OCI-LY7 (cell line): ENCODE measurements at regions of chrX and their contacts with region 1.

Region 1: DNA sequence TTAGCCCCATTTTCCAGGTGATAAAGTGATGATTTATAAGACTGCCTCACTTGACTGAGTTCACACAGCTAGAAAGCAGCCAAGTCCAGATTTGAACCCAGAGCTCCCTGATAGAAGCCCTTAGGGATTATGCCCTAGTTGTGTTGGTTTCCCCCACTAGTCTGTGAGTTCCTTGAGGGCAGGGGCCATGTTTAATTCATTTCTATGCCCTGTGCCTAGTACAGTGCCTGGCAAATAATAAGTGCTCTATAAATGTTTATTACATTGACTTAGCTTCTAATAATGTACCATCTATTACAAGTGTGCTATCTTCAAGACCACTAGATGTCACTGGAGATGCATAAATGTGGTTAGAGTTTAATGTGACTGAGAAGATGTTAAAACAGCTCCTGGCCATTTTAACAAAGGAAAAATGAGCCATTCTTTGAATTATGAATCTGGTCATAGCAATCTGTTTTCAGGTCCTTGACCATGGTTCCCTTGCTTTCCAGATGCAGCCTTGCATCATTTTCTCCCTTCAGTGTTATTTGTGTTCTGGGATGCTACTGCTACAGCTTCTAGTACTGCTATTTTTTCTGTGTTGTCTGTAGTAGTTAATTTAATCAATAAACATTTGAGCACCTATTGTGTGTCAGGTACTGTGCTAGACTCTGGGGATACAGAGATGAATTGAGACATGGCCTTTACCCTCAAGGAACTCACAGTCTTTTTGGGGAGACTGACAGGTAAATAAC is 43.2 kb downstream of the SLC9A6 start:
- DNase-seq: peak; percentile 43
- H3K4me3 ChIP-seq: no peak overlapping the region
- H3K27ac ChIP-seq: no peak overlapping the region
- H3K4me1 ChIP-seq: no peaks in the 10 kb centered on the region
- CTCF ChIP-seq: peak; percentile 75

Region 2: GRCh38 chrX:135213200-135213844 is 815.1 kb before region 1 on chrX:
- CTCF ChIA-PET with region 1: no interaction called
- POLR2A ChIA-PET with region 1: no interaction called
- intact Hi-C with region 1: no loop called
- DNase-seq: no peak
- H3K4me3 ChIP-seq: no peak overlapping the region
- H3K27ac ChIP-seq: no peak overlapping the region
- H3K4me1 ChIP-seq: no peaks in the 10 kb centered on the region
- CTCF ChIP-seq: no peak

Region 3: GRCh38 chrX:135985141-135985972 is 43.1 kb before region 1 on chrX and contains the start of gene SLC9A6:
- CTCF ChIA-PET with region 1: no interaction called
- POLR2A ChIA-PET with region 1: no interaction called
- intact Hi-C with region 1: no loop called
- DNase-seq: peak; percentile 83
- H3K4me3 ChIP-seq: peak within 1 kb of the TSS; percentile 84
- H3K27ac ChIP-seq: peak within 1 kb of the TSS; percentile 66
- H3K4me1 ChIP-seq: peaks cover 18% of the 10 kb centered on the region
- CTCF ChIP-seq: no peak
- total RNA-seq, gene SLC9A6: 5.9 and 7.7 TPM in 2 replicates

Region 4: DNA sequence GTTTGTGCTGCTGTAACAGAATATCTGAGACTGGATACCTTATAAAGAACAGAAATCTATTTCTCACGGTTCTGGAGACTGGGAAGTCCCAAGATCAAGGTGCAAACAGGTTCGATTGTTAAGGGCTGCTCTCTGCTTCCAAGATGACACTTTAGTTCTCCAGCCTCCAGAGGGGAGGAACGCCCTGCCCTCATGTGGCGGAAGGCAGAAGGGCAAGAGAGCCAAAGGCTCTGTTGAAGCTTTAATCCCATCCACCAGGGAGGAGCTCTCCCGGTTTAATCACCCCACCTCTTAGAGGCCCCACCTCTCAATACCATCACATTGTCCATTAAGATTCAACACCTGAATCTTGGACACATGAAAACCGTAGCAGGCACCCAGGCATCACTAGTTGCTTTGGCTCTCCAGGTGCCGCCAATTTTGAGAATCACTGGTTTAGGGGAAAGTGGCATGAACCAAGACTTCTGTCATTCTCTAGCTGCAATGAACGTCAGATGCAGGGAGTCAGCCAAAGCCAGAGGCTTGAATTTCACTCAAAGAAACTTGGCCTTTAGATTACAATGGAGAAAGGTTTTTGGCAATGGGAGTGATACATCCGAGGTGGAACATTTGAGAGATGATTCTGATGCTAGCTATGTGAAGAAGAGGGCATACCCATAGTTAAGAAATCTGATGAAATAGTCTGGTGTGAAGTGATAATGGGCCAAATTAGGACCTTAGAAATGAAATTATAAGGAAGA is 134.6 kb after region 1 on chrX:
- CTCF ChIA-PET with region 1: interaction called, 14 read pairs
- POLR2A ChIA-PET with region 1: interaction called, 3 read pairs
- intact Hi-C with region 1: loop called (anchors 2 kb)
- DNase-seq: peak; percentile 42
- H3K4me3 ChIP-seq: no peak overlapping the region
- H3K27ac ChIP-seq: no peak overlapping the region
- H3K4me1 ChIP-seq: peaks cover 1% of the 10 kb centered on the region
- CTCF ChIP-seq: peak; percentile 74

Region 5: GRCh38 chrX:136200466-136200865 is 172.0 kb after region 1 on chrX:
- CTCF ChIA-PET with region 1: no interaction called
- POLR2A ChIA-PET with region 1: no interaction called
- intact Hi-C with region 1: loop called (anchors 5 kb)
- DNase-seq: peak; percentile 1
- H3K4me3 ChIP-seq: no peak overlapping the region
- H3K27ac ChIP-seq: no peak overlapping the region
- H3K4me1 ChIP-seq: no peaks in the 10 kb centered on the region
- CTCF ChIP-seq: peak; percentile 63

Region 6: GRCh38 chrX:136251041-136251991 is 222.9 kb after region 1 on chrX and contains the start of gene MAP7D3:
- CTCF ChIA-PET with region 1: no interaction called
- POLR2A ChIA-PET with region 1: no interaction called
- intact Hi-C with region 1: no loop called
- DNase-seq: peak; percentile 76
- H3K4me3 ChIP-seq: peak within 1 kb of the TSS; percentile 90
- H3K27ac ChIP-seq: no peak within 1 kb of the TSS
- H3K4me1 ChIP-seq: peaks cover 9% of the 10 kb centered on the region
- CTCF ChIP-seq: no peak
- total RNA-seq, gene MAP7D3: 7.7 and 11.9 TPM in 2 replicates

Region 7: DNA sequence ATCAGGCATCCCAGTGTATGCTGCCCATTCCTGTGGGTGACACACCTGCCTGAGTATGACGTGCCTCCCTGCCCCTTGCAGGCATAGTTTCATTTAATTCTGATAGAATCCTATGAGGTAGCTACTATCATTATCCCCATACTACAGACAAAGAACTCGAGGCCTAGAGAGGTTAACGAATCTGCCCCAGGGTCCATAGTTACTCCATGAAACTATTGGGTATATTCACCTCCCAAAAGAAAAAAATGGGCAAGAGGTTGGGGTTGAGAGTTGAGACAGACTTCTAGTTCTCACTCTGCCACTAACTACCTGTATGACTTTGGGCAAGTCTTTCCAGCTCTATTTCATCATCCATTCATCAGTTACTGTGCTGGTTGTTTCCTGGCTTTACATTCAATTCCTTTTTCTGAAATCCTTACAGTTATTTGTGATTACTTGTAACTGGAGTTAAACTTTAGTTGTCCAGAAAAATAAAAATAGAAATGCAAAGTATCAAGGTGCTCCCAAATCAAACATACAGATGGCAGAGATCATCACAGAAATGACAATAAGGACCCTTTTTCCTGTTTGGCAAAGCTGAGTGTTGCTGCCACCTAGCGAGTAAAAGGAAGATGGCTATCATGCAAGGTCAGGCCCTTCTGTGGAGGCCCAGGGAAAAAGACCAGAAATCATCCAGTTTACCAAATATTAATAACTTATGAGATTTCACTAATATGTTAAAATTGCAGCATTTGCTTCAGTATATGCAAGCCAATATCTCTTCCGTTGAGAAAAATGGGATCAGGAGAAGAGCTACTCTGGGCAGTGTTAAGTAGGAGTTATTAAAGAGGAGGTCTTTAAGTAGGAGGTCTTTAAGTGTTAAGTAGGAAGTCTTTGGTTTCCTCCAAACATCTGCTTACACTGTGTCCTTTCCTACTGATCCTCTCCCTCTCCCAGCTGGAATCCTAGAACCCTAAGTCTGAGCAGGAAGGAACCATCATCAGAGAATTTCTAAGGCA is 239.9 kb after region 1 on chrX:
- CTCF ChIA-PET with region 1: no interaction called
- POLR2A ChIA-PET with region 1: interaction called, 4 read pairs
- intact Hi-C with region 1: loop called (anchors 5 kb)
- DNase-seq: peak; percentile 63
- H3K4me3 ChIP-seq: no peak overlapping the region
- H3K27ac ChIP-seq: no peak overlapping the region
- H3K4me1 ChIP-seq: peaks cover 33% of the 10 kb centered on the region
- CTCF ChIP-seq: peak; percentile 84

Region 8: GRCh38 chrX:136694431-136695087 is 666.1 kb after region 1 on chrX:
- CTCF ChIA-PET with region 1: no interaction called
- POLR2A ChIA-PET with region 1: no interaction called
- intact Hi-C with region 1: loop called (anchors 10 kb)
- DNase-seq: peak; percentile 58
- H3K4me3 ChIP-seq: peak overlapping the region; percentile 31
- H3K27ac ChIP-seq: peak overlapping the region; percentile 40
- H3K4me1 ChIP-seq: peaks cover 18% of the 10 kb centered on the region
- CTCF ChIP-seq: peak; percentile 78